Tibial artery (tissue), 4 donors: ENCODE measurements at regions of chrX and their contacts with region 1.

Region 1: DNA sequence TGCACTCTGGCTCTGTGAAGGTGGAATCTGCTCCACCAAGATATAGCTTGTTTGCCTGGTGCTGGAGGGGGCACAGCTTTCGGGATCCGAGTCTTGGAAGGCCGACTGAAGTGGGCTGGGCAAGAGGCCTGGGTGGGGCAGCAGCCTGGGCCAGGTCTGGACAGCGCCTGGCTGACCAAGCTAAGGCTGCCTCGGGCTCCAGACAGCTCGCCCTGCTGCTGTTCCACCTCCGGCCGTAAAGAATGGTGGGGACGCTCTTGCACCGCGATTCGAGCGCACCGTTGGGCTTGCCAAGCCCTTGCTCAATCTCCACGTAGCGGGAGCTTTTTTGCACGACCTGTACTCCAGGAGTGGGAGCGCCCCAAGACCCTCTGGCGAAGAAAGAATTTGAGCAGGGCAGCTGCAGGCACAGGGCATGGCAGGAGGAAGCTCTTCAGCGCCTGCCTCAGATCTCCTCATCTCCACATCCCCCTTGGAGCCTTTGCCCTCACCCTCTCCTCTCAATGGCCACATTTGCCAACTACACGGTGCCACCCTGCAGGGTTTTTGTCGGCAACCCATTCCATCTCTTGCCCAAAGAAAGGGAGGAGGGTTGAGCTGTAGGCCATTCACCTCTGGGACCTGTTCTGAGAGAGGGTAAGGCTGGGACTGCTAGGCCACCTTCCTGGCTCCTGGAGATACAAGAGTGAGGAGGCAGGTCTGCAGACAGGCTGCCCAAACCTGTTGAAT is 18.9 kb downstream of the CNGA2 start:
- DNase-seq: peak; percentile 30 to 68
- H3K4me3 ChIP-seq: no peak overlapping the region
- H3K27ac ChIP-seq: no peak overlapping the region
- H3K4me1 ChIP-seq: peaks cover 0 to 8% (median 2%) of the 10 kb centered on the region in 4 donors
- H3K27me3 ChIP-seq: no peaks in the 10 kb centered on the region
- CTCF ChIP-seq: peak; percentile 74 to 78

Region 2: GRCh38 chrX:151478058-151478457 is 275.4 kb before region 1 on chrX:
- intact Hi-C with region 1: loop called (anchors 5 kb)
- DNase-seq: no peak
- H3K4me3 ChIP-seq: no peak overlapping the region
- H3K27ac ChIP-seq: no peak overlapping the region
- H3K4me1 ChIP-seq: no peaks in the 10 kb centered on the region
- H3K27me3 ChIP-seq: no peaks in the 10 kb centered on the region
- CTCF ChIP-seq: no peak

Region 3: DNA sequence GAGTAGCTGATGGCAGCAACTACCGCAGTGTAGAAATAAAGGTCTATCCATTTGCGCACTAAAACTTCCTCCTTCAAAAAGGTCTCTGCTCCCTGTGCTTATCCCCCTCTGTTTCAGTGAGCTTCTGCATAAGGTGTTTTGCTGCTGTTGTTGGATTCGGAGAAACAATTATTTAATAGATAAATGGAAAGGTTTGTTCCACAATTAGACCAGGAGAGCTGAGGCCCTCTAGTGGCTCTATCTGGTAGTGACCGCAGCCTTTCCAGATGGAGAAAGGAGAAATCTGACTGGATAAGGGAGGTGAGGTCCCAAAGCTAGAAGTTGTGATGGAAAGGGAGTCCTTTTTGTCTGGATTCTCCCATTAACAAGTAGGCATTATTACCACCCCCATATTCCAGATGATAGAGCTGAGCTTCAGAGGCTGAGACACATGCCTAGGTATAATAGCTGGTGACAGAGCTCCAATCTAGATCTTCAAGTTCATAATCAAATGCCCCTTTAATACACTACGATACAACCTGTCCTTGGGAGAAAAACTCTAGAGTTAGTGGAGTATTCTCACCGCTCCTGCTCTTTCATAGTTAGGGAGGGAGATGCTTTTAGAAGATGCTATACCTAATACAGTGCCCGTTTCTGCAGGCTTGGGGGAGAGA is 879.1 kb after region 1 on chrX:
- intact Hi-C with region 1: loop called (anchors 5 kb)
- DNase-seq: peak in 1 of 2 donors; percentile 55
- H3K4me3 ChIP-seq: no peak overlapping the region
- H3K27ac ChIP-seq: no peak overlapping the region
- H3K4me1 ChIP-seq: peaks cover 0 to 2% (median 0%) of the 10 kb centered on the region in 4 donors
- H3K27me3 ChIP-seq: peaks cover 0 to 5% of the 10 kb centered on the region in 2 donors
- CTCF ChIP-seq: peak; percentile 56 to 63